ENCODE measurements at regions of chr6 and their contacts with region 1.

Region 1: GRCh38 chr6:109221543-109222195 is 126.4 kb downstream of the CEP57L1 start:
- DNase-seq: no peak
- H3K4me3 Mint-ChIP-seq: no peak overlapping the region
- H3K27ac Mint-ChIP-seq: no peak overlapping the region
- H3K4me1 Mint-ChIP-seq: peaks cover 31% of the 10 kb centered on the region
- H3K27me3 Mint-ChIP-seq: peaks cover 10% of the 10 kb centered on the region

Region 2: DNA sequence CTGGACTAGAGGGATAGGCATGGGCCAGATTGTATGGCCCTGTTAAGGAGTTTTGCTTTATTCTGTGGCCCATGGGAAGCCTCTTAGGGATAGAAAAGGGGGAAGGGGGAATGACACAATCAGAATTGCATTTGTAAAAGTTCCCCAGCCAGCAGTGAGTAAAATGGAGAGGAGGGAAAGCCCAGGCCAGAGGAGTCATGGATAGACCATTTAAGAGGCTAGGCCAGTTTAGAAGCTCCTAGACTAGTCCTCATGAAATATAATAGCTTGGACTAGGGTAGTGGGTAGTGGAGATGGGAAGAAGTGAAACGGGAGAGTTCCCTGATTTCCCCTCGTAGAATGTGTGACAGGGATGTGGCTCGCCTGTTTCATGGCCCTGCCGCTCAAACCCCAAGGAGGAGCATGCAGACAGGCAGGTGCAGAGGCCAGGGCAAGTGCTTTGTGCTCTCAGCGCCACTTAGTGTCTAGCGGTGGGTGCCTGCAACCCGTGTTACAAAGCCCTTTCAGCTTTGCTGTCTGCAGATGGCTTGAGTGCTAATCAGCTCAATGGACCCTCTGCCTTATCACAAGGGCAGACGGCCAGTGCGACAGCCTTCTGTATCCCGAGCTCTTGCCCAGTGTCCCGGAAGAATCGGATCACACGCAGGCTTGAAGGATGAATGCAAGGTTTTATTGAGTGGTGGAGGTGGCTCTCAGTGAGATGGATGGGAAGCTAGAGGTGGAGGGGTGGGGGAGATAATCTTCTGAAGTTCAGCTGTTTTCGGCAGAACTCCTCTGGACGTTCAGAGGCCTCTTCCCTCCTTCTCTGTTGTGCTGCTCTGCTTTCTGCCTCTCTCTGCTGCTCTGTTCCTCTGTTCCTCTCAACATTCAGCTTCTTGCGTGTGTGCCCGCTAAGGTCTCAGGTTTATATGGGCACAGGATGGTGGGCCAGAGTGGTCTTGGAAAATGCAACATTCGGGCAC is 14.7 kb after region 1 on chr6:
- intact Hi-C with region 1: loop called (anchors 2 kb)
- DNase-seq: peak; percentile 31
- H3K4me3 Mint-ChIP-seq: peak overlapping the region; percentile 31
- H3K27ac Mint-ChIP-seq: peak overlapping the region; percentile 37
- H3K4me1 Mint-ChIP-seq: peaks cover 25% of the 10 kb centered on the region
- H3K27me3 Mint-ChIP-seq: no peaks in the 10 kb centered on the region

Measured in activated T-helper 1 cell treated with anti-CD3 and anti-CD28 coated beads, Interleukin-12 subunit alpha, Interleukin-12 subunit beta, Interleukin-2, Interleukin-4 antibody, amounts not matched to agents 30 ng/mL and 10 ng/mL and 1 ng/mL, durations not matched to agents 14 hours and 24 hours and 36 hours (primary cell).